ENCODE measurements at regions of chr9 and their contacts with region 1.

Region 1: DNA sequence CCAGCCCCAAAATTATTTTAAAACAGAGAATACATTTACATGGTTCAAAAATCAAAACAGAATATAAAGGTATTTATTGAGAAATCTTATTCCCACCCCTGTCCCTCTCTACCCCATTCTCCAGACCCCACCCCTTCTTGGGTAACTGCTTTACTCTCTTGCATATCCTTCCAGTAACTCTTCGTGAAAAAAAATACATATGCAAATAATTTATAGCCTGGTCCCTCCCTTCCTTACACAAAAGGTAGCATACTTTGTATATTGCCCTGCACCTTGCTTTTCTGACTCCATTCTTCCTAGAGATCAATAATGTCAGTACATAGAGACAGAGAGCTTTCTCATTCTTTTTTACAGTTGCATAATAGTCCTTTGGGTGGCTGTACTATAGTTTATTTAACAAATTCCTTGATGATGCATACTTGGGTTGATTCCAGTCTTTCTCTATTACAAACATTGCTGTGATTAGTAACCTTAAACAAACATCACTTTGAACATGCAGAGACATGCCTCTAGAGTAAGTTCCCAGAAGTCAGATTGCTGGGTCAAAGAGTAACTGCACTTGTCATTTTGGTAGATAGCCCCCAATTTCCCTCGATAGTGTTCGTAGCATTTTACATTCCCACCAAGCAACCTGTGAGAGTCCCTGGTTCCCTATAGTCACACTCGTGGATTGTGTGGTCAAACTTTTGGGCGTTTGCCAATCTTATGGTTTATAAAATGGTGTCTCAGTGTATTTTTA is 47.8 kb downstream of the STOM start:
- DNase-seq: peak in 1 of 3 donors; percentile 43
- ATAC-seq: peak; percentile 12 to 68 (median 43)
- H3K4me3 ChIP-seq: no peak overlapping the region
- H3K27ac ChIP-seq: peak overlapping the region; percentile 85 to 96 (median 85)
- H3K4me1 ChIP-seq: peaks cover 0 to 45% (median 20%) of the 10 kb centered on the region in 4 donors
- H3K27me3 ChIP-seq: no peaks in the 10 kb centered on the region
- CTCF ChIP-seq: no peak
- POLR2A ChIP-seq: no peak

Region 2: DNA sequence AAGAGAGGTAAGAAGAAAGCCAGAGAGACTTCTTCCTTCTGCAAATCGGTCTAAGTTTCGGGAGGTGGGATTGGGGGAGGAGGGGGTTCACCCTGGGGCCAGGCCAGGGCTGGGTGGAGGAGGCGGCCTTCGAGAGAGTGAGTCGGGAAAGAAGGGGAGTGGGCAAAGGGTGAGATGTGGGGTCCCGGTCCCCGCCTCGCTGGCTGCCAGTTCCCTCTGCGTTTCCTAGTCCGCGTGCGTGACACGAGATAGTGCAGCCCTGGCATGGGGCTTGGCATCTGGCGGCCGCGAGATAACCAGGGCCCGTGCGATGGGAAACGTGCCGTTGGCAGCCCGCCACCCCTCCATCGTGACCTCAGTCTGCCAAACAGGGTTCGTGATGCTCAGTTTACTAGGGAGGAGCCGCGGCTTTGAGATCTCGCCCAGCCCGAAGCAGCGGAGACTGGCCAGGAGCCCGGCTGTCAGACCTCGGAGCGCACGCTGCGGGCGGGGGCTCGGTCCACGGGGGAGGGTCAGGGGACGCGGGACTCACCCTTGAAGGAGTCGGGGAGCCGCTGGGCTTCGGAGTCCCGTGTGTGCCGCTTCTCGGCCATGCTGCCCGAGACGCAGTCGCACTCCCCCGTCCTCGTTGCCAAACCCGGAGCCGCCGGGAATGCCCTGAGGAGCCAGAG is 47.5 kb after region 1 on chr9 and contains the start of gene STOM:
- intact Hi-C with region 1: loop called (anchors 5 kb)
- DNase-seq: peak; percentile 89 to 98 (median 96)
- ATAC-seq: peak; percentile 44 to 72 (median 66)
- H3K4me3 ChIP-seq: peak within 1 kb of the TSS; percentile 76 to 88 (median 77)
- H3K27ac ChIP-seq: peak within 1 kb of the TSS; percentile 97 to 98 (median 98)
- H3K4me1 ChIP-seq: peaks cover 0 to 63% (median 27%) of the 10 kb centered on the region in 4 donors
- H3K27me3 ChIP-seq: no peaks in the 10 kb centered on the region
- CTCF ChIP-seq: no peak
- POLR2A ChIP-seq: peak; percentile 100
- total RNA-seq, gene STOM: 232 to 655 (median 443) TPM

Region 3: GRCh38 chr9:121483049-121483448 is 160.8 kb after region 1 on chr9:
- intact Hi-C with region 1: no loop called
- DNase-seq: no peak
- ATAC-seq: no peak
- H3K4me3 ChIP-seq: no peak overlapping the region
- H3K27ac ChIP-seq: no peak overlapping the region
- H3K4me1 ChIP-seq: peaks cover 0 to 4% (median 1%) of the 10 kb centered on the region in 4 donors
- H3K27me3 ChIP-seq: no peaks in the 10 kb centered on the region
- CTCF ChIP-seq: no peak
- POLR2A ChIP-seq: no peak

Measured in right lobe of liver (tissue), 6 donors.